ENCODE measurements at regions of chr15 and their contacts with region 1.

Region 1: DNA sequence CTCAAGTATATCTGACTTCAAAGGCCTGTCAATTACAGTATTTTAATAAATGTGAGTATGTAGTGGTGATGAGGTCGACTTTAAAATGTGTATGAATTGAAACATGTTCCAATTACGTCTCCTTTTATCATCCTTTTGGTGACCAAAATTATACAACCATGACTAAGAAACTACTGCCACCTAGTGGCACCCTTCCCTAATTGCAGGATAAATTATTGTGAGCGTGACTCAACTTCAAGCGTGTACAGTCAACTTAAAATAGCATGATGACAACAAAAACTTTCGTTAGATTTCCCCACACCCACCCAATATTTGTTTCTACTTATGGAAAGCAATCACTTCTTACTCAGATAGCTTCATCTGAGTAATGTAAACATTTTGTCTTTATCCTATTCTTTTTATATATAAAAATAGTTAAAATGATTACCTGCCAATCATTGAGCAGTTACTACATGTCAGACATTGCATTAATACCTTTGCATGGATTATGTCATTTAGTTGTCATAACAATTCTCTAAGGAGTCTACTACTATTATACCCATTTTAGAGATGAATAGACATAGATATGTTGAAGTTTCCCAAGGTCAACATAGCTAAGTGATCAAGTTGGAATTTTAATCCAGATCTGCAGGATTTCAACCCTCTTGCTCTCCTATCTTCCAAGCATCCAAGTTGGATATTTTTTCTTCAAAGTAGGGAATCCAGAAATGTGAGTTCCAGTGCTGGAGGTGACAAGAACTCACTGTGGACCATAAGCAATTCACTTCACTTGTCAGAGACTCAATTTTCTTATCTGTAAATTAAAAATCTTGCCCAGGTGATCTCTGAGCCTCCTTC is 106.0 kb downstream of the MEX3B start:
- DNase-seq: peak; percentile 50
- ATAC-seq: 0 out of 2 replicates have a peak, but pooled peaks have one; percentile 46
- H3K4me3 ChIP-seq: no peak overlapping the region
- H3K27ac ChIP-seq: no peak overlapping the region
- H3K4me1 ChIP-seq: no peaks in the 10 kb centered on the region
- H3K27me3 ChIP-seq: no peaks in the 10 kb centered on the region; the same call in 1 of the 2 replicates
- CTCF ChIP-seq: peak; percentile 42 to 88 (median 56); a peak in 5 of 6 replicates
- POLR2A ChIP-seq: no peak
- RAD21 ChIP-seq: peak; percentile 62

Region 2: DNA sequence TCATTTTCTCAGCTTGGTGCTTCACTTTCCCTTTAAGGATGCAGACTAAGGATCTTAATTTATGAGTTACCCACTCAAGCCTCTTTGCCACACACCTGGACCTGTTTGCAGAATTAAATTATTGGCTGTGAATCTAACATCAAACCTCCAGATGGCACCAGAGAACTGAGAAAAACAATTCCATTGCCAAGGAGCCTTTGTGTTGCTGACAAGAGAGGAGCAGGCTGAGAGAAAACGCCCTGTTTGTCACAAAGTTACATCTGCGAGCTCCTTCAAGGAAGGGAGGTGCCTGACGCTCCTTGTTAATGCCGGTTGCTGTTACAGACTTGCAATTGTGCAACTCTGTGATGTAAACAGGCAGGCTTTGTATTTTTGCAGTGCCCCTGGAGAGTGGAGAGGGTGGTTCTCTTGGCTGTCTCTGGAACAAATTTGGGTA is 529.5 kb before region 1 on chr15:
- CTCF ChIA-PET with region 1: no interaction called
- POLR2A ChIA-PET with region 1: no interaction called
- RAD21 ChIA-PET with region 1: no interaction called
- intact Hi-C with region 1: loop called (anchors 10 kb)
- DNase-seq: peak; percentile 56
- ATAC-seq: peak; percentile 87
- H3K4me3 ChIP-seq: no peak overlapping the region
- H3K27ac ChIP-seq: no peak overlapping the region
- H3K4me1 ChIP-seq: no peaks in the 10 kb centered on the region
- H3K27me3 ChIP-seq: peaks cover 15% of the 10 kb centered on the region
- CTCF ChIP-seq: peak; percentile 36 to 59 (median 52); a peak in 4 of 6 replicates
- POLR2A ChIP-seq: no peak
- RAD21 ChIP-seq: peak; percentile 73

Region 3: DNA sequence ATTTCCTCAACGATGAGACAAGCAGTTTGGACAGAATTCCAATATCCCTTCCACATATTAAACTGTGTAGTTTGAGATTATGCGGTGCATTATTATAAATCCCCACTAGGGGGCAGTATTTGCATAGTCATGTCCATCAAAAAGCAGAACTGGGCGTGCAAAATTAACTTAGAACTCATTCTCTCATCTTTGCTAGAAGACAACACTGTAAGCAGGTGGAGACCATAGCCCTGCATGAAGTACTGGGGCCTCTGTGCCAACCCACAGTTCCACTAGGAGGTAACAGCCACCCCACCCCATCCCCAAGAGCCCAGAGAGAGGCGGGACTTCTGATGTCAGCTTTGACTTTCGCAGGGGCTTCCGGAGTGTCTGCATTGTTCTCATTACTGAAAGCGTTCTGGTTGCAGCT is 459.2 kb before region 1 on chr15:
- CTCF ChIA-PET with region 1: no interaction called
- POLR2A ChIA-PET with region 1: no interaction called
- RAD21 ChIA-PET with region 1: no interaction called
- intact Hi-C with region 1: loop called (anchors 1 kb)
- DNase-seq: peak; percentile 24
- ATAC-seq: peak; percentile 78
- H3K4me3 ChIP-seq: no peak overlapping the region
- H3K27ac ChIP-seq: no peak overlapping the region
- H3K4me1 ChIP-seq: no peaks in the 10 kb centered on the region
- H3K27me3 ChIP-seq: peaks cover 27% of the 10 kb centered on the region; the same call in 1 of the 2 replicates
- CTCF ChIP-seq: peak; percentile 62 to 89 (median 72); a peak in 5 of 6 replicates
- POLR2A ChIP-seq: no peak
- RAD21 ChIP-seq: peak; percentile 80

Region 4: DNA sequence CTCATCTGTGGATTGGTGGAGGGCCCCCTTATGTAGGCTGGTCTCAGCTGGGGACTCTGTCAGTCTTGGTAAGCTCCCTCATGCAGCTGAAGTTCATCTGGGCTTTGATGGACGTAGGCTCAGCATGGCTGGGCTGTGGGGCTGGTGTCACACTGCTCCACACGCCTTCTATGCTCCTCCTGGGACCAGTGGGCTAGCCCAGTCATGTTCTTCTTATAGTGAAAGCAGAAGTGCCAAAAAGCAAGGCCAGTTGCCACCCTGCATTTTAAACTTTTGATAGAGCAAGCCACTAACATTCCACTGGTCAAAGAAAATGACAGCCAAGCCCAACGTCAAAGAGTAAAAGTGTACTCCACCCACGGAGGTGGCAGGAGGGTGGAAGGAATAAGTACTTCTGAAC is 59.5 kb before region 1 on chr15:
- CTCF ChIA-PET with region 1: no interaction called
- POLR2A ChIA-PET with region 1: no interaction called
- RAD21 ChIA-PET with region 1: no interaction called
- intact Hi-C with region 1: loop called (anchors 10 kb)
- DNase-seq: no peak
- ATAC-seq: no peak
- H3K4me3 ChIP-seq: no peak overlapping the region
- H3K27ac ChIP-seq: no peak overlapping the region
- H3K4me1 ChIP-seq: no peaks in the 10 kb centered on the region
- H3K27me3 ChIP-seq: 0 out of 2 replicates have a peak, but pooled peaks cover 1% of the 10 kb centered on the region
- CTCF ChIP-seq: no peak
- POLR2A ChIP-seq: no peak
- RAD21 ChIP-seq: no peak

Region 5: GRCh38 chr15:82197733-82198594 is 258.1 kb after region 1 on chr15:
- CTCF ChIA-PET with region 1: no interaction called
- POLR2A ChIA-PET with region 1: no interaction called
- RAD21 ChIA-PET with region 1: no interaction called
- intact Hi-C with region 1: loop called (anchors 10 kb)
- DNase-seq: peak; percentile 51
- ATAC-seq: peak; percentile 99
- H3K4me3 ChIP-seq: no peak overlapping the region
- H3K27ac ChIP-seq: no peak overlapping the region
- H3K4me1 ChIP-seq: no peaks in the 10 kb centered on the region
- H3K27me3 ChIP-seq: no peaks in the 10 kb centered on the region
- CTCF ChIP-seq: peak; percentile 59 to 76 (median 74); a peak in 5 of 6 replicates
- POLR2A ChIP-seq: no peak
- RAD21 ChIP-seq: peak; percentile 75

Region 6: GRCh38 chr15:82916161-82916952 is 976.5 kb after region 1 on chr15:
- CTCF ChIA-PET with region 1: no interaction called
- POLR2A ChIA-PET with region 1: no interaction called
- RAD21 ChIA-PET with region 1: no interaction called
- intact Hi-C with region 1: no loop called
- DNase-seq: no peak
- ATAC-seq: no peak
- H3K4me3 ChIP-seq: no peak overlapping the region
- H3K27ac ChIP-seq: no peak overlapping the region
- H3K4me1 ChIP-seq: no peaks in the 10 kb centered on the region
- H3K27me3 ChIP-seq: no peaks in the 10 kb centered on the region
- CTCF ChIP-seq: no peak
- POLR2A ChIP-seq: no peak
- RAD21 ChIP-seq: no peak